Activated T-helper 1 cell treated with anti-CD3 and anti-CD28 coated beads, Interleukin-12 subunit alpha, Interleukin-12 subunit beta, Interleukin-2, Interleukin-4 antibody, amounts not matched to agents 30 ng/mL and 10 ng/mL and 1 ng/mL, durations not matched to agents 14 hours and 24 hours and 36 hours (primary cell): ENCODE measurements at regions of chr19 and their contacts with region 1.

Region 1: GRCh38 chr19:48321622-48322591 is 3.4 kb upstream of the EMP3 start:
- DNase-seq: peak; percentile 100
- H3K4me3 Mint-ChIP-seq: peak overlapping the region; percentile 87
- H3K27ac Mint-ChIP-seq: peak overlapping the region; percentile 98
- H3K4me1 Mint-ChIP-seq: peaks cover 70% of the 10 kb centered on the region
- H3K27me3 Mint-ChIP-seq: peaks cover 2% of the 10 kb centered on the region

Region 2: GRCh38 chr19:47600246-47601179 is 721.4 kb before region 1 on chr19:
- intact Hi-C with region 1: loop called (anchors 10 kb)
- DNase-seq: peak; percentile 98
- H3K4me3 Mint-ChIP-seq: peak overlapping the region; percentile 87
- H3K27ac Mint-ChIP-seq: peak overlapping the region; percentile 89
- H3K4me1 Mint-ChIP-seq: peaks cover 31% of the 10 kb centered on the region
- H3K27me3 Mint-ChIP-seq: peaks cover 1% of the 10 kb centered on the region

Region 3: DNA sequence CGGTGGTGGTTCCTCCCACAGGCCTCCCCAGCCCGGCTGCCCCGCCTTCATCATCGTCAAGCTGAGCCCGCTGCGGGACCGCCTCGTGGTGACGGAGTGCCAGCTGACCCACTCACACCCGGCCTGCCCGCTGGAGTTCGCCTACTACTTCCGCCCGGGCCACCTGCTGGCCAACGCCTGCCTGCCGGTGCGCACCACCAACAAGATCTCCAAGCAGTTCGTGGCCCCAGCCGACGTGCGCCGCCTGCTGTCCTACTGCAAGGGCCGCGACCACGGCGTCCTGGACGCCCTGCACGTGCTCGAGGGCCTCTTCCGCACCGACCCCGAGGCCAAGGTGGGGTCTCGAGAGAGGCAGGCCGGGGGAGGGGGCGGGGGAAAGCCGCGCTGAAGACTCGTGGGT is 139.5 kb before region 1 on chr19:
- intact Hi-C with region 1: no loop called
- DNase-seq: no peak
- H3K4me3 Mint-ChIP-seq: no peak overlapping the region
- H3K27ac Mint-ChIP-seq: no peak overlapping the region
- H3K4me1 Mint-ChIP-seq: no peaks in the 10 kb centered on the region
- H3K27me3 Mint-ChIP-seq: no peaks in the 10 kb centered on the region

Region 4: DNA sequence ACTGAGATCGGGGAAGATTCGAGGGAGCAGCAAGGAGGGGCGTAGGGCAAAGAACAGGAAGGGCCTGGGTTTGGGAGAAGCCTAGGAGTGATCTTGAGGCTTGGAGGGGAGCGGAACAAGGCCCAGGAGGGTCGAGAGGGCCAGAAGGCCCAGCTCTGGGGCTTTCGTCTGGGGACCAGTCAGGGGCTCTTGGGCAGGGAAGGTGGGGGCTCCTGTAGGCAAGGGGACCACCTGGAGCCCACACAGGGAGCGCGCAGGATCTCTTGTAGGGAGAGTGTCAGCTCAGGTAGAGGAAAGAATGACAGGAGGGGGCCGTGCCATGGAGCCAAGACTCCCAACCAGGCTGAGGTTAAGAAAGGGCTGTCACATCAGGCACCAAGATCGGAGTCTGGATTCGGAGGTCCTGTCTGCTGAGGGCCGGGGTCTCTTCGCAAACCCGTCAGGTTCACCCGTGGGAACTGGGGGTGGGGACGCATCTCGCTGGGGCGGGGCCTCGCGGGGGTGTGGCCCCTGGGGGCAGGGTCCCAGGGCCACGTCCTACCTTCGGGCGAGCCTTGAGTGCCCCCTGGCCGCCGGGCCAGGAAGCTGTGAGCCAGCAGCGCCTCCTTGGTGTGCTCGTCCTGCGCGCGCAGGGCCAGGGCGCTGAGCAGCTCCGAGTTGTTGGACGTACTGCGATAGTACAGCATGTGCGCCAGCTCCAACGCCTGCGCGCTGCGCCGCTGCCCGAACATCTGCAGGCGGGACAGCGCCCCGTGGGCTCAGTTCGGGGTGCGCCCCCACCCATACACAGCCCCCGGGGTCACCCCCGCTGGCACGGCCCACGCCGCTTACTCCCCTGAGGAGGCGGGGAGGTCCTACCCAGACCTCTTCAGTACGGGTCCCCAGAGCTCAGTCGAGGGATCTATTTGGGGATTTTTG is 11.8 kb after region 1 on chr19:
- intact Hi-C with region 1: loop called (anchors 1 kb)
- DNase-seq: peak; percentile 92
- H3K4me3 Mint-ChIP-seq: peak overlapping the region; percentile 95
- H3K27ac Mint-ChIP-seq: peak overlapping the region; percentile 97
- H3K4me1 Mint-ChIP-seq: peaks cover 55% of the 10 kb centered on the region
- H3K27me3 Mint-ChIP-seq: peaks cover 1% of the 10 kb centered on the region

Region 5: DNA sequence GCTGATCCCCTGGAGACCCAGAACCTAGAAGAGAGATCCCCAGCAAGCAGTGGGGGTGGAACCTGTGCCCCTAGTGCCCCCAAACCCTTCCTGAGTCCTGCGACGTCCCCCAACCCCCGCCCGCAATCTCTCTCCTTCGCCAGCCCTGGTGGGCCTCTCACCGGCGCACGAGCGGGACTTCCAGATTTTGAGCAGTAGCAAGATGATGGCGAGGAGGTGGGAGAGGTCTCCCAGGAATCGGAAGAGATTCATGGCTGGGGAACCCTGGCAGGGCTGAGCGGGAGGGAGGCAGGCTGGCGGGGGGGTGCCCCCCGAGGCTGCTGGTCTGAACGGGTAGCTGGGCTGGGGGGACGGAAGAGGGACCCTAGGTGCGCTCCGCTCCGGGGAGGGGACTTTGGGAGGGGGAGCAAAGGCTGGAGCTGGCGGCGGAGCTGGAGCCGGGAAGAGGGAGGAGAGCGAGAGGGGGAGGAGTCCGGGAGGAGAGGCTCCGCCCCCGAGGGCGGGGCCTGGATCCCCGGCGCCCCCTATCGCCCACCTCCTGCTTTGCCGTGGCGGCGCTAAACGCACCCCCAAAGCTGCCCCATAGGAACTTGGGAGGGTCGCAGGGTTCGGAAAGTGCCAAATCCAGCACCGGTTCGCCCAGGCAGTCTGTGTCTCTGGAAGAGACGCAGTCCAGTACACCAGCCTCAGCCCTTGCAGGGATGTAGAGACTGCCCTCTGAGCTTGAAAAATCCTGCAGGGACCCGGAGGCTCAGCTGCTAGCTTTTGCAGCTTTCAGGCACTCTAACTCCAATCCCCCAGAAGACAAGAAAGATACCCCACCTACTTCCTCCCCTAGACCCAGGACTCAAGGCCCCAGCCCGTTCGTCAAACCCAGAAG is 69.4 kb after region 1 on chr19 and contains the start of gene KDELR1:
- intact Hi-C with region 1: loop called (anchors 2 kb)
- DNase-seq: peak; percentile 69
- H3K4me3 Mint-ChIP-seq: peak within 1 kb of the TSS; percentile 98
- H3K27ac Mint-ChIP-seq: peak within 1 kb of the TSS; percentile 98
- H3K4me1 Mint-ChIP-seq: peaks cover 13% of the 10 kb centered on the region
- H3K27me3 Mint-ChIP-seq: peaks cover 36% of the 10 kb centered on the region
- total RNA-seq, gene KDELR1: 70.9 and 74.2 TPM in 2 replicates

Region 6: GRCh38 chr19:48468775-48469288 is 146.9 kb after region 1 on chr19:
- intact Hi-C with region 1: loop called (anchors 2 kb)
- DNase-seq: peak; percentile 100
- H3K4me3 Mint-ChIP-seq: peak overlapping the region; percentile 90
- H3K27ac Mint-ChIP-seq: peak overlapping the region; percentile 88
- H3K4me1 Mint-ChIP-seq: peaks cover 12% of the 10 kb centered on the region
- H3K27me3 Mint-ChIP-seq: no peaks in the 10 kb centered on the region

Region 7: GRCh38 chr19:48629599-48630295 is 307.8 kb after region 1 on chr19:
- intact Hi-C with region 1: no loop called
- DNase-seq: no peak
- H3K4me3 Mint-ChIP-seq: no peak overlapping the region
- H3K27ac Mint-ChIP-seq: no peak overlapping the region
- H3K4me1 Mint-ChIP-seq: peaks cover 18% of the 10 kb centered on the region
- H3K27me3 Mint-ChIP-seq: no peaks in the 10 kb centered on the region

Region 8: DNA sequence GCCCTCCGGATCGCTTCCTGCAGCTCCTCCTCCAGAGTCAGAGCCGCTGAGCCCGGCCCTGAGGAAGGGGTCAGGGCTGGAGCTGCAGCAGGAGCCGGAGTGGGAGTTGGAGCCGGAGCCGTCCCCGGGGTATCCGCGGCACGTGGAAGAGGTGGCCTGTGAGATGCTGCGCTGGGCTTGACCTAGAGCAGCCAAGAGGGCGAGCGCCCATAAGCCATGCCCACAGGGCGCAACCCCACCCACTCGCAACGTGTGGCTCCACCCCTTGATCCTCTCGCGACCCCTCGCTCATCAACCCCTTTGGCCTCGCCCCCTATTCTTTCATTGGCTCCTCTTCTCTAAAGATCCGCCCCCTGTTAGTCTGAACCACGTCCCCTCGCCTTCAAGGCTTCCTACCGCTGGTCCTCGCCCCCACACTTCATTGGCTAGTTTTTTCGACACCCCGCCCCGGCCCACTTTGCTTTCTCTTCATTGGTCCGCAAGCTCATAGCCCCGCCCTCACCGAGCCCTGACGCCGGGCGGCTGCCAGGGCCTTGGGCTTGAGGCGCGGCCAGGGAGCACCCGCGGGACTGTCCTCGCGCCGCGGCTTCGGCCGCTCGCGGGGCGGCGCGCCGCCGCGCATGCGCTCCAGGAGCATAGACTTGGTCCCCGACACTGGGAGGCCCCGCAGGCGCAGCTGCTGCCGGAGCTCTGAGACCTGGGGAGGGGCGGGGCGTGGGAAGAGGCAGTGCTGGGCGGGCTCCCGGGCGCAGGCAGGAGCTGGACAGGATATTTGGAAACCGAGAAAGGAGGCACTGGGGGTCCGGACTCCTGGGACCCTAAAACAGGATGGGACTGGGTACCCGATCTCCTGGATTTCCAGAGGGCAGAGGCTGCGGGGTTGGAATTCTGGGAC is 392.2 kb after region 1 on chr19:
- intact Hi-C with region 1: loop called (anchors 10 kb)
- DNase-seq: peak; percentile 98
- H3K4me3 Mint-ChIP-seq: peak overlapping the region; percentile 80
- H3K27ac Mint-ChIP-seq: peak overlapping the region; percentile 83
- H3K4me1 Mint-ChIP-seq: peaks cover 8% of the 10 kb centered on the region
- H3K27me3 Mint-ChIP-seq: peaks cover 1% of the 10 kb centered on the region